ENCODE measurements at regions of chr2 and their contacts with region 1.

Region 1: GRCh38 chr2:118865106-118865505 is 17.7 kb upstream of the EN1 start:
- DNase-seq: no peak
- ATAC-seq: peak; percentile 84 to 86

Region 2: GRCh38 chr2:118032169-118033013 is 832.7 kb before region 1 on chr2:
- intact Hi-C with region 1: loop called (anchors 5 to 10 kb)
- DNase-seq: peak; percentile 35
- ATAC-seq: peak; percentile 49 to 53

Region 3: DNA sequence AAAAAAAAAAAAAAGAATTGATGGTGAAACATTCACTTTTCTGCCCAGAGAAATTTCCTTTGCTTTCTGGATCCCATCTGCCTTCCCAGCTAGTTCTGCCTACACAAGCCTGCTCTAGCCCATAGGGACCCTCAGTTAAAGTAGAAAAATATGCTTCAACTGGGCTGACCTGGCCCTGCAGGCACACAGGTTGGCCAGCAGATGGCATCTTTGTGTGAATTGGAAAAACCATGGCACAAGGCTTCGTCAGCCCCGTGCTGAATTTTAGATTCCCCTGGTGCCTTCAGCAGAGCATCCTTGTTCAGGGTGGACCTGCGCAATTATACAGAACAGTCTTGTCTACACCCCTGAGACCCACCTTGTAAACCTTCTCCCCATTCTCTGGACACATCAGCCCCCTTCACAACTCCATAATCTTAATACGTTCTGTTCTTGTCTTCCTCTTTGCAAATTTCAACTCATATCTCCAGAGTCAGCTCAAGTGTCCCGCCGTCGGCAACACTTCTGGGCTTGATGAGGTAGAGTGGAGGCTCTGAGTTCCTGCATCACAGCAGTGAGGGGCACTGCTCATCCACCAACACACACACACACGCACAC is 662.3 kb before region 1 on chr2:
- intact Hi-C with region 1: loop called (anchors 5 to 10 kb)
- DNase-seq: peak; percentile 37
- ATAC-seq: peak; percentile 55 to 62

Region 4: DNA sequence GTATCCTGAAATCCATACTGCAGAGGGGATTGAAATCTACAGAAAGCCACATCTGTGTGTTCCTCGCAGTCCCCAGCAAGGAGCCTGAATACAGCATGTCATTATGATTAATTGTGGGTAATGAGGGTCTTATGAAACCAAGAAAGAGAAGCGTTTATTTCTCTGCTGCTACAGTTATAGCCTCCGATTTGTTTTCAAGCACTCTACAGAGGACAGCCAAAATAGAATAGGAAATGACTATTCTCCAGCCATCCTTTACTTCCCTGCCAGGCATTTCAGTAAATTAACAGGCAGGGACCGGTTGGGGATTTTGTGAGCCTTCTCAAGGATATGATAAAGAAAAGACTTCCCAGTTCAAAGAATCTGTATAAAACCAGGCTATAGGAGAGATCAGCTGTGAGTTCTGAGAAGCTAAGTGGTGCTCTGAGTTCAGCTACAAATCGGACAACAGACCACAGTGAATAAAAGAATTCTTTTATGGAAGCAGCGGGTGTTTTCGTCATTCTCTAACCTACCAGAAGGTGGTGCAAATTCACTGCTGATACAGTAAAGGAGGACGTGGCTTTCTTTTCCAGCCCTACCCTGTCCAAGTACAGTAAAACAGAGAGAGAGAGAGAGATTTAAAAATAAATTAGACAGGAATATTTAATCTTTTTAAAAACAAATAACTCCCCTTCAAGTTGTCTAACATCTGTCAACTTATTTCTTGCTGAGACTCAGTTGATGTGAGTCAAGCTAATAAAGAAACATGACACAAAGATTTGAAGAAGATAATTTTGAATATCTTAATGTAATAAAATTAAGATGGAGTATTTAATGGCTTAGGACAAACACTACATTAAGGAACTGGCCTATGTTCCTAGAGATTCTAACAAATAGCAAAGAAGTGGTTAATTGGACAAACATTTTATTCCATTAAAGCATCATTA is 643.2 kb before region 1 on chr2:
- intact Hi-C with region 1: loop called in 1 of 2 experiments (anchors 2 kb)
- DNase-seq: no peak
- ATAC-seq: peak; percentile 78 to 85